AG04449 (cell line): ENCODE measurements at regions of chr1 and their contacts with region 1.

Region 1: DNA sequence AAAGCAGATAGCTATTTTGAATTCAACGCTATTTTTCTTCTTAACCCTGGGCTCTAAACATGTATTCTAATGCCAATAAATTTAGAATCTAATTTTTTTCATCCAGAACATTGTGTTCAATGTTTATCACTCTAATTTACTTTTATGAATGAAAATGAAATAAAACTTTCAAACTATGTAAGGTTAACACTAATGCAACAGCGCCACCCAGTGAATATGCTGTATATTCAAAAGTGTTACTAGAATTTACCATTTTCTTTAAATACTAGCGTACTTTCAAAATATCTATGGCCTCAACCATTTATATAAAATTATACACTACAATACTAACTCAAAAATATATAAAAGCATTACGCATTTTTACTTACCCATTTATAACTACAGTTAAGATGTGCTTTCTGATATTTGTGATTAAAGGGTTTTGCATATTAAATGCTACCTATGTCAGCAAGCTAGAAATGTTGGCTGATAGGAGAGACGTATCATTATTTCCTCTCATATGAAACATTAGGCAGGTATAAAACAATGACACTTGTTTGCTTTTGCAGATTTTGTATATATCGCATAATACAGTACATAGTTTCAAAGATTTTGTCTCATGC is 5.9 kb upstream of the NUF2 start:
- DNase-seq: no peak
- H3K4me3 ChIP-seq: no peak overlapping the region
- CTCF ChIP-seq: peak; percentile 39

Region 2: DNA sequence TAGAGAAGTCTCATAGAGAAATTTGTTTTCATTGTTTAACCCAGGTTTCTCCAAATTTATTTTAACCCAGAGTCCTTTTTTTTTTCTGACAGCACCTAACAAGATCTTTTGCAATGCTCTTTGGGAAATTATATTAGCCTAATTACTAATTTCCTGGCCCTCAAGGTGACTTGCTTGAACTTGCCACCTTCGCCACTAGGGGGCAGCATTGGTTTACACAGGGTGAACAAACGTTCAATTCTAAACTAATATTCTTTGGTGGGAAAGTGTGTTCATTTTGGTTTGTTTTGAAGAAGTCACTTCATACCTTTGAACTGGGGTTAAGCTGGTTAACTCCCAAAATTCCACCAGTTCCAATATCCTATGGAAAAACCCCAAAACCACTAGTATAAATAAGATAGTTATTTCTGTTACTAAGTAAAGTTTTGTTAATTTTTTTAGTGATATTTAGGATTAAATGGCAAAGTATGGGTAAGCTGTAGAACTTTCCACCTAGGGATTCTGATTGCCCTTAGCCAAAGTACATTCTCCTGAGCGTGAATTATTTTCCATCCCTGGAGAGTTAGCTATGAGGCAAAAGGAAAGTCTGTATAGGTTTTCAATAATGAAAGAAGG is 467.9 kb before region 1 on chr1:
- CTCF ChIA-PET with region 1: interaction called, 142 read pairs
- POLR2A ChIA-PET with region 1: no interaction called
- DNase-seq: no peak
- H3K4me3 ChIP-seq: no peak overlapping the region
- CTCF ChIP-seq: peak; percentile 83

Region 3: DNA sequence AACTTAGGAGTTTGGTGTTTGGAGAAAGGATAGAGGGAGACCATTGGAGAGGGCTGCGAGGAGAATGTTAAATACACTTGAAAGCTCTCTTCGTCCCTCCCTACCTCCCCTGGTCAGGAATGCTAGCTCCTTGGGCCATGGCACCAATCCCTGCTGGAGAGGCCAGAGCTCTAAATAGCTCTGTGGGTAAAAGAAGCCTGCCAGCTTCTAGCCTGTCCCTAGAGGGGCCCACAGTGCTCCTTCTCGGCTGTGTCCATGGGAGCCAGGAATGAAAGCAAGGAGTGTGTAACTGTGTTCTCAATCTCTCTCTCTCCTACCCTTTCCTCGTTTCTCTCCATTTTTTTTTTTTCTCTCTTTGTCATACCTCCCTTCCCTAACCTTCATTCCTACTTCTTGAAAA is 454.8 kb before region 1 on chr1 and contains the start of gene CCDC190:
- CTCF ChIA-PET with region 1: interaction called, 22 read pairs
- POLR2A ChIA-PET with region 1: no interaction called
- DNase-seq: no peak
- H3K4me3 ChIP-seq: no peak within 1 kb of the TSS
- CTCF ChIP-seq: no peak

Region 4: GRCh38 chr1:163085041-163085903 is 230.6 kb before region 1 on chr1:
- CTCF ChIA-PET with region 1: interaction called, 11 read pairs
- POLR2A ChIA-PET with region 1: no interaction called
- DNase-seq: no peak
- H3K4me3 ChIP-seq: no peak overlapping the region
- CTCF ChIP-seq: no peak

Region 5: GRCh38 chr1:163300568-163300967 is 15.3 kb before region 1 on chr1:
- CTCF ChIA-PET with region 1: interaction called, 12 read pairs
- POLR2A ChIA-PET with region 1: no interaction called
- DNase-seq: no peak
- H3K4me3 ChIP-seq: no peak overlapping the region
- CTCF ChIP-seq: no peak